GM12878 (cell line): ENCODE measurements at regions of chr7 and their contacts with region 1.

Region 1: DNA sequence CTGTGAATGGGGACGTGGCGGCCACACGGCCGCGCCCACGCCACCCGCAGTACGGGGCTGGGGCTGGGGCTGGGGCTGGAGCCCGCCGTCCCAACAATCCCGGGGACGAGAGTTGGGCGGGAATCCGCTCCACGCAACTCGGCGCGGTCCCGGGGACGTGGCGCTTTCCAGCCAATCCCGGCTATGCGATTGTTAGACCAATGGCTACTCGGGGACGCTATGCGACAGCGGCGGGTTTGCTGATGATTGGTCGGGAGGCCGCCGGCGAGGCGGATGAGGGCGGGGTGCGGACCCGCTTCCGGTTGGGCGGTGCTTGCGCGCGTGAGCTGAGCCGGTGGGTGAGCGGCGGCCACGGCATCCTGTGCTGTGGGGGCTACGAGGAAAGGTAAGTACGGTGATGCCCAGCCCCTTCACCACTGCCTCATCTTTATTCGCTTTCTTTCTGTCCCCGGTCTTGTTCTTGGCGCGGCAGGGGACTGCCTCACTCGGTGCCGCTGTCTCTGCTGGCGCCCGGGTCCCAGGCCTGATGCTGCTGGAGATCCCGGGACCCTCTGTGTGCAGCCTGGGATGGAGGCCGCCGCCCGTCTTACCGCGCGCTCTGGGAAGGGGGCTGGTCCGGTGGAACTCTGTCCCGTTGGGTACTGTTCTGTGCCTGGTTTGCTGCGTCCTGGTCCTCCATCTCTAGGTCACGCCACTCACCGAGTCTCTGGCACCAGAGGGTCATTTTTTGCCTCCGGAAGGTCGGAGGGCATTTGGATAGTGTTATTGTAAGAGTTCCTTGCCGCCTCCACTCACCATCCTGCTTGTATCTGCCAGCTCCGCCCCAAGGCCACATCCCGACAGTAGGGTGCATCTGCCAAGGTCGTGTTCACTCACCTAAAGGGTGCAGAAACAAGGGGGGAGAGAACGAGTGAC is at the start of gene CALU:
- DNase-seq: peak; percentile 78
- ATAC-seq: peak; percentile 99
- H3K4me3 ChIP-seq: peak within 1 kb of the TSS; percentile 87
- H3K27ac ChIP-seq: peak within 1 kb of the TSS; percentile 91
- H3K4me1 ChIP-seq: peaks cover 5% of the 10 kb centered on the region; the same call in 1 of the 2 replicates
- H3K27me3 ChIP-seq: no peaks in the 10 kb centered on the region
- CTCF ChIP-seq: no peak
- EP300 ChIP-seq: no peak
- POLR2A ChIP-seq: peak; percentile 93
- RAD21 ChIP-seq: no peak
- polyA plus RNA-seq, gene CALU: 33.6 to 44.3 TPM

Region 2: GRCh38 chr7:128681794-128682537 is 57.3 kb before region 1 on chr7:
- CTCF ChIA-PET with region 1: interaction called, 8 read pairs
- POLR2A ChIA-PET with region 1: interaction called, 25 read pairs
- RAD21 ChIA-PET with region 1: interaction called, 6 read pairs
- SMC1A ChIA-PET with region 1: interaction called, 13 read pairs
- in situ Hi-C with region 1: no loop called
- intact Hi-C with region 1: no loop called
- DNase-seq: no peak
- ATAC-seq: peak; percentile 80
- H3K4me3 ChIP-seq: no peak overlapping the region
- H3K27ac ChIP-seq: peak overlapping the region; percentile 8; the same call in 1 of the 2 replicates
- H3K4me1 ChIP-seq: no peaks in the 10 kb centered on the region
- H3K27me3 ChIP-seq: no peaks in the 10 kb centered on the region
- CTCF ChIP-seq: no peak
- EP300 ChIP-seq: no peak
- POLR2A ChIP-seq: no peak
- RAD21 ChIP-seq: no peak

Region 3: GRCh38 chr7:128726059-128726736 is 13.1 kb before region 1 on chr7:
- CTCF ChIA-PET with region 1: interaction called, 13 read pairs
- POLR2A ChIA-PET with region 1: interaction called, 4 read pairs
- RAD21 ChIA-PET with region 1: interaction called, 3 read pairs
- SMC1A ChIA-PET with region 1: interaction called, 16 read pairs
- in situ Hi-C with region 1: no loop called
- intact Hi-C with region 1: no loop called
- DNase-seq: no peak
- ATAC-seq: no peak
- H3K4me3 ChIP-seq: no peak overlapping the region
- H3K27ac ChIP-seq: no peak overlapping the region
- H3K4me1 ChIP-seq: no peaks in the 10 kb centered on the region
- H3K27me3 ChIP-seq: no peaks in the 10 kb centered on the region; a peak in 1 of 4 replicates
- CTCF ChIP-seq: no peak
- EP300 ChIP-seq: no peak
- POLR2A ChIP-seq: no peak
- RAD21 ChIP-seq: no peak

Region 4: GRCh38 chr7:128862571-128863432 is 123.5 kb after region 1 on chr7 and contains the start of gene ATP6V1F:
- CTCF ChIA-PET with region 1: interaction called, 6 read pairs
- POLR2A ChIA-PET with region 1: interaction called, 3 read pairs
- RAD21 ChIA-PET with region 1: interaction called, 6 read pairs
- SMC1A ChIA-PET with region 1: interaction called, 3 read pairs
- in situ Hi-C with region 1: no loop called
- intact Hi-C with region 1: loop called (anchors 5 kb)
- DNase-seq: peak; percentile 97
- ATAC-seq: peak; percentile 93
- H3K4me3 ChIP-seq: peak within 1 kb of the TSS; percentile 84
- H3K27ac ChIP-seq: peak within 1 kb of the TSS; percentile 62
- H3K4me1 ChIP-seq: peaks cover 8% of the 10 kb centered on the region; the same call in 1 of the 2 replicates
- H3K27me3 ChIP-seq: no peaks in the 10 kb centered on the region
- CTCF ChIP-seq: no peak
- EP300 ChIP-seq: no peak
- POLR2A ChIP-seq: peak; percentile 90
- RAD21 ChIP-seq: no peak
- polyA plus RNA-seq, gene ATP6V1F: 246 to 343 TPM

Region 5: GRCh38 chr7:129252128-129252527 is 512.8 kb after region 1 on chr7:
- CTCF ChIA-PET with region 1: no interaction called
- POLR2A ChIA-PET with region 1: no interaction called
- RAD21 ChIA-PET with region 1: no interaction called
- SMC1A ChIA-PET with region 1: no interaction called
- in situ Hi-C with region 1: no loop called
- intact Hi-C with region 1: no loop called
- DNase-seq: no peak
- ATAC-seq: no peak
- H3K4me3 ChIP-seq: no peak overlapping the region
- H3K27ac ChIP-seq: no peak overlapping the region
- H3K4me1 ChIP-seq: no peaks in the 10 kb centered on the region
- H3K27me3 ChIP-seq: no peaks in the 10 kb centered on the region
- CTCF ChIP-seq: no peak
- EP300 ChIP-seq: no peak
- POLR2A ChIP-seq: no peak
- RAD21 ChIP-seq: no peak